ENCODE measurements at regions of chr1 and their contacts with region 1.

Region 1: GRCh38 chr1:32981003-32981901 is 16.6 kb upstream of the RNF19B start:
- DNase-seq: peak; percentile 69 to 82 (median 73)
- H3K4me3 ChIP-seq: peak overlapping the region; percentile 12 to 46
- H3K4me3 Mint-ChIP-seq: peak overlapping the region; percentile 68 to 86 (median 83)
- H3K27ac ChIP-seq: peak overlapping the region; percentile 93
- H3K27ac Mint-ChIP-seq: peak overlapping the region; percentile 88 to 98 (median 96)
- H3K4me1 ChIP-seq: peaks cover 51% of the 10 kb centered on the region
- H3K4me1 Mint-ChIP-seq: peaks cover 26 to 52% (median 41%) of the 10 kb centered on the region in 4 donors
- H3K27me3 ChIP-seq: no peaks in the 10 kb centered on the region
- H3K27me3 Mint-ChIP-seq: no peaks in the 10 kb centered on the region

Region 2: GRCh38 chr1:32733582-32734321 is 247.5 kb before region 1 on chr1:
- CTCF ChIA-PET with region 1: no interaction called
- POLR2A ChIA-PET with region 1: no interaction called
- intact Hi-C with region 1: no loop called
- DNase-seq: no peak
- H3K4me3 ChIP-seq: no peak overlapping the region
- H3K4me3 Mint-ChIP-seq: no peak overlapping the region
- H3K27ac ChIP-seq: no peak overlapping the region
- H3K27ac Mint-ChIP-seq: no peak overlapping the region
- H3K4me1 ChIP-seq: peaks cover 5% of the 10 kb centered on the region
- H3K4me1 Mint-ChIP-seq: peaks cover 6 to 10% (median 8%) of the 10 kb centered on the region in 4 donors
- H3K27me3 ChIP-seq: no peaks in the 10 kb centered on the region
- H3K27me3 Mint-ChIP-seq: peaks cover 0 to 2% of the 10 kb centered on the region in 2 donors

Region 3: DNA sequence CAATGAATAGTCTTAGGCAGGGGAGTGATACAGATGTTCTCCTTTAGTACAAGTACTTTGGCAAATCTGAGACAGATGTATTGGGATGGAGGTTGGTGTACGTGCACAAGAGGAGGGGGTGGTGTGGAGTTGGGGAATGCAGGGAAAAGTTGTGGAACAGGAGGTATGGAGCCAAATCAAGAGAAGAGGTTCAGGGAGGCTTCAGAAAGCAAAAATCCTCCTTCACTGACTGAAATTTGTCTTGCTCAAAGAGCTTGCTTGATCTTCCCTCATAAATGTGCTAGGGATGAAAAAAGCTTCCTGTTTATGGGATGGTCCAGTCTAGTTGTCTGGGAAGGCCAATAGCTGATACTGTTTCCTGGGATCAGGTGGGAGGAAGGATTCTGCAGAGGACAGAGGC is 22.4 kb before region 1 on chr1:
- CTCF ChIA-PET with region 1: interaction called, 5 read pairs
- POLR2A ChIA-PET with region 1: interaction called, 205 read pairs
- intact Hi-C with region 1: loop called (anchors 1 kb)
- DNase-seq: no peak
- H3K4me3 ChIP-seq: no peak overlapping the region
- H3K4me3 Mint-ChIP-seq: peak overlapping the region in 3 of 8 donors; percentile 1 to 35 (median 13)
- H3K27ac ChIP-seq: no peak overlapping the region
- H3K27ac Mint-ChIP-seq: peak overlapping the region in 5 of 7 donors; percentile 0 to 82 (median 64)
- H3K4me1 ChIP-seq: peaks cover 68% of the 10 kb centered on the region
- H3K4me1 Mint-ChIP-seq: peaks cover 53 to 89% (median 75%) of the 10 kb centered on the region in 4 donors
- H3K27me3 ChIP-seq: no peaks in the 10 kb centered on the region
- H3K27me3 Mint-ChIP-seq: no peaks in the 10 kb centered on the region

Region 4: GRCh38 chr1:32992489-32993323 is 11.5 kb after region 1 on chr1:
- CTCF ChIA-PET with region 1: interaction called, 3 read pairs
- POLR2A ChIA-PET with region 1: interaction called, 15 read pairs
- intact Hi-C with region 1: no loop called
- DNase-seq: peak; percentile 18 to 86 (median 36)
- H3K4me3 ChIP-seq: no peak overlapping the region
- H3K4me3 Mint-ChIP-seq: peak overlapping the region in 2 of 8 donors; percentile 24 to 35
- H3K27ac ChIP-seq: peak overlapping the region; percentile 40
- H3K27ac Mint-ChIP-seq: peak overlapping the region; percentile 47 to 95 (median 83)
- H3K4me1 ChIP-seq: peaks cover 35% of the 10 kb centered on the region
- H3K4me1 Mint-ChIP-seq: peaks cover 19 to 44% (median 35%) of the 10 kb centered on the region in 4 donors
- H3K27me3 ChIP-seq: no peaks in the 10 kb centered on the region
- H3K27me3 Mint-ChIP-seq: no peaks in the 10 kb centered on the region

Region 5: GRCh38 chr1:34101151-34101550 is 1119.9 kb after region 1 on chr1:
- CTCF ChIA-PET with region 1: no interaction called
- POLR2A ChIA-PET with region 1: no interaction called
- intact Hi-C with region 1: no loop called
- DNase-seq: no peak
- H3K4me3 ChIP-seq: no peak overlapping the region
- H3K4me3 Mint-ChIP-seq: no peak overlapping the region
- H3K27ac ChIP-seq: no peak overlapping the region
- H3K27ac Mint-ChIP-seq: no peak overlapping the region
- H3K4me1 ChIP-seq: no peaks in the 10 kb centered on the region
- H3K4me1 Mint-ChIP-seq: no peaks in the 10 kb centered on the region
- H3K27me3 ChIP-seq: no peaks in the 10 kb centered on the region
- H3K27me3 Mint-ChIP-seq: peaks cover 3 to 14% of the 10 kb centered on the region in 2 donors